Activated CD4-positive, alpha-beta memory T cell treated with anti-CD3 and anti-CD28 coated beads, Interleukin-2, amount 10 ng/mL, durations not matched to agents 7 days and 5 days (primary cell): ENCODE measurements at regions of chr9 and their contacts with region 1.

Region 1: DNA sequence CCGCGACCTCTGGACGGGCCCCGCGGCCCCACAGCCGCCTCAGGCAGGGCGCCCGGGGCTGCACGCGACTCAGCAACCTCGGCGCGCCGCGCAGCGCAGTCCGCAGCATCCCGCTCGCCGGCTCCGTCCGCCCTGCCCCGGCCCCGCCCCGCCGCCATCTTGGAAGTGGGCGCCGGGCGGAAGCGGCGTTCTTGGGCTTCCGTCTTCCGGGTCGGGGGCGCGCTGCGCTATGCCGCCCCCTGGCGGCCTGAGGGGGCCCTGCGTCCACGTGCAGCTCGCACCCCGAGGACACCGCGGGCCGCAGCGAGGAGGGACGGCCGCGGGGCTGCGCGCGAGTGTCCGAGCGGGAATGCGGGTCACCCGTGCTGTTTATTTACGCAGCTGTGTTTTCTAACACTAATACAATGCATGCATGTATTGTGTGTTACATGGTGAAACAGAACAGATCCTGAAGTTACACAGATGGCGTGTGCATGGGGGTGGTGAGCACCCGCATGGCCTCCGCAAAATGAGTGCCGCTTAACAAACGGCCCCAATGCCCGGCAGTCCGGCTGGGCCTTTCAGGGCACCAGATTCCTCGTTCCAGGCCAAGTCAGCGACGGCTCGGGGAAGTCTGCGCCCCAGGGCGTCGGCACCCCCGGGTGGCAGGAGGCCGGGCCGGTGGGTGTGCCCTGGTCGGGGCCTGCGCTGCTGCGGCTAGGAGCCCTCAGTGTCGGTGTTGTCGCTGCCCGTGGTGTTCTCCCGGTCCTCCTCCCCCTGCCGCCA is at the start of gene DNLZ:
- DNase-seq: peak; percentile 89
- H3K4me3 Mint-ChIP-seq: peak within 1 kb of the TSS; percentile 82
- H3K27ac Mint-ChIP-seq: peak within 1 kb of the TSS; percentile 88
- H3K4me1 Mint-ChIP-seq: peaks cover 6% of the 10 kb centered on the region
- H3K27me3 Mint-ChIP-seq: no peaks in the 10 kb centered on the region
- total RNA-seq, gene DNLZ: 11.5 TPM

Region 2: GRCh38 chr9:136389396-136389795 is 25.6 kb after region 1 on chr9:
- CTCF ChIA-PET with region 1: interaction called, 9 read pairs
- POLR2A ChIA-PET with region 1: interaction called, 13 read pairs
- DNase-seq: no peak
- H3K4me3 Mint-ChIP-seq: no peak overlapping the region
- H3K27ac Mint-ChIP-seq: no peak overlapping the region
- H3K4me1 Mint-ChIP-seq: peaks cover 20% of the 10 kb centered on the region
- H3K27me3 Mint-ChIP-seq: no peaks in the 10 kb centered on the region

Region 3: GRCh38 chr9:136400038-136400834 is 36.4 kb after region 1 on chr9 and contains the start of gene SNAPC4:
- CTCF ChIA-PET with region 1: interaction called, 31 read pairs
- POLR2A ChIA-PET with region 1: interaction called, 23 read pairs
- DNase-seq: peak; percentile 89
- H3K4me3 Mint-ChIP-seq: peak within 1 kb of the TSS; percentile 83
- H3K27ac Mint-ChIP-seq: peak within 1 kb of the TSS; percentile 78
- H3K4me1 Mint-ChIP-seq: peaks cover 61% of the 10 kb centered on the region
- H3K27me3 Mint-ChIP-seq: no peaks in the 10 kb centered on the region
- total RNA-seq, gene SNAPC4: 8.8 TPM

Region 4: DNA sequence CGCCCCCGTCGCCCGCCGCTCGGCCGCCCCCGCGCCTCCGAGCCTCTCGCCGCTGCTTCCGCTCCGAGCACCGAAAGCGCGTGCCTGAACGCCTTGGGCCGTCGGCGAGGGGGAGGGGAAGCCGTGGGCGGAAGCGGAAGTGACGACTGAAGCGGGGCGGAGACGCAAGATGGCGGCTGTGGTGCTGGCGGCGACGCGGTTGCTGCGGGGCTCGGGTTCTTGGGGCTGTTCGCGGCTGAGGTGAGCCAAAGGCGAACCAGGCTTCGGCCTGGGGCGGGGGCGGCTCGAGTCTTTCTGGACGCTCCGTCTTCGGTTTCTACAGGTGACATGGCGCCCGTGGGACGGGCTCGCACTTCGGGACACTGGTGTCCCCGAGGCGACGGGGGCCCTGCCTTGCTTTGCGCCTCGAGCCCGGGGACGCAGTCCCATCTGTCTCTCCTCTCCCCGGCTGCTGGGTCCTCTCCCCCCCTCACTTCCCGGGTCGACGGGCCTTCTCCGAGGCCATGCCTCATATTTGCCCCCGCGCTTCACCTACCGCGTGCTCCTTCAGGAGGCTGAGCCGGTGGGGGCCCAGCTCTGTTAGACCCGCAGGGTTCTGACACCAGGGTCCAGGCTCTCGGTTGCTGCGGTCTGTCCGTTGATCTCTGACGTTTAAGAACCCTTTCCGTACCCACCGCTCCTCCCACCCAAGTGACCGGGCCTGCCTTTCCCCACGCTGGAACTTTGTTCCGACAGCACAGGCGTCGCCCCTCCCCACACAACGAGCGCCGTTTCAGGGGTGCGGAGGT is 46.9 kb after region 1 on chr9 and contains the starts of genes ENTR1 and PMPCA:
- CTCF ChIA-PET with region 1: interaction called, 8 read pairs
- POLR2A ChIA-PET with region 1: interaction called, 10 read pairs
- DNase-seq: peak; percentile 94
- H3K4me3 Mint-ChIP-seq: peak within 1 kb of the TSS; percentile 87
- H3K27ac Mint-ChIP-seq: peak within 1 kb of the TSS; percentile 84
- H3K4me1 Mint-ChIP-seq: peaks cover 52% of the 10 kb centered on the region
- H3K27me3 Mint-ChIP-seq: no peaks in the 10 kb centered on the region
- total RNA-seq, gene ENTR1: 49.2 to 54.9 TPM
- total RNA-seq, gene PMPCA: 56.6 to 62.2 TPM